H1 (cell line): ENCODE measurements at regions of chr22 and their contacts with region 1.

Region 1: DNA sequence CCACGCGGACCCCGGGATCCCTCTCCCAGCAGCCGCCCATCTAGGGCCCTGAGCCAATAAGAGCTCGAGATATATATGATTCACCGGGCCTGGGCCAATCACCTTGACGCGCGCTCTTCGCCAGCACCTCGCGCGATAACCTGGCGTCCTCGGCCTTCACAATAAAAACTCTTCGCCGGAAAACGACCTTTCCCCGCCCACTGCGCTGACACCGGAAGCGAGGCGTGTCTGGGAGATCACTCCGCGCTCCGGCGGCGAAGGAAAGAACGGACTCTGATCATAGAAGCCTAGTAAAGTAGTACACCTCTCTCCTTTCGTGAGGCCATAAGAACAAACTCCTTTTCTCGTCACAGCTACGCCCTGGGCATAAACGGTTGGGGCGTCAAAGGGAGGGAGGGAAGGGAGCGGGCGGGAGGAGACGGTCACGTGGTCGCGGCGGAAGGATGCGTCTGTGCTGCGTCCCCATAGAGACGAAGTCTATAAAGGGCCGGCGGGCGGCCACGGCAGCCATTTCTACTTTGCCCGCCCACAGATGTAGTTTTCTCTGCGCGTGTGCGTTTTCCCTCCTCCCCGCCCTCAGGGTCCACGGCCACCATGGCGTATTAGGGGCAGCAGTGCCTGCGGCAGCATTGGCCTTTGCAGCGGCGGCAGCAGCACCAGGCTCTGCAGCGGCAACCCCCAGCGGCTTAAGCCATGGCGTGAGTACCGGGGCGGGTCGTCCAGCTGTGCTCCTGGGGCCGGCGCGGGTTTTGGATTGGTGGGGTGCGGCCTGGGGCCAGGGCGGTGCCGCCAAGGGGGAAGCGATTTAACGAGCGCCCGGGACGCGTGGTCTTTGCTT is at the start of gene ATF4:
- DNase-seq: peak; percentile 93 to 96
- H3K4me3 ChIP-seq: peak within 1 kb of the TSS; percentile 93 to 99 (median 95)
- H3K27ac ChIP-seq: peak within 1 kb of the TSS; percentile 99
- H3K4me1 ChIP-seq: peaks cover 0 to 12% (median 5%) of the 10 kb centered on the region in 4 experiments; a peak in 4 of 7 replicates
- H3K27me3 ChIP-seq: peaks cover 0 to 6% (median 2%) of the 10 kb centered on the region in 4 experiments; a peak in 3 of 7 replicates
- CTCF ChIP-seq: no peak
- EP300 ChIP-seq: no peak; a peak in 1 of 3 replicates
- POLR2A ChIP-seq: peak; percentile 96 to 98
- RAD21 ChIP-seq: no peak
- total RNA-seq, gene ATF4: 543 and 553 TPM in 2 replicates

Region 2: DNA sequence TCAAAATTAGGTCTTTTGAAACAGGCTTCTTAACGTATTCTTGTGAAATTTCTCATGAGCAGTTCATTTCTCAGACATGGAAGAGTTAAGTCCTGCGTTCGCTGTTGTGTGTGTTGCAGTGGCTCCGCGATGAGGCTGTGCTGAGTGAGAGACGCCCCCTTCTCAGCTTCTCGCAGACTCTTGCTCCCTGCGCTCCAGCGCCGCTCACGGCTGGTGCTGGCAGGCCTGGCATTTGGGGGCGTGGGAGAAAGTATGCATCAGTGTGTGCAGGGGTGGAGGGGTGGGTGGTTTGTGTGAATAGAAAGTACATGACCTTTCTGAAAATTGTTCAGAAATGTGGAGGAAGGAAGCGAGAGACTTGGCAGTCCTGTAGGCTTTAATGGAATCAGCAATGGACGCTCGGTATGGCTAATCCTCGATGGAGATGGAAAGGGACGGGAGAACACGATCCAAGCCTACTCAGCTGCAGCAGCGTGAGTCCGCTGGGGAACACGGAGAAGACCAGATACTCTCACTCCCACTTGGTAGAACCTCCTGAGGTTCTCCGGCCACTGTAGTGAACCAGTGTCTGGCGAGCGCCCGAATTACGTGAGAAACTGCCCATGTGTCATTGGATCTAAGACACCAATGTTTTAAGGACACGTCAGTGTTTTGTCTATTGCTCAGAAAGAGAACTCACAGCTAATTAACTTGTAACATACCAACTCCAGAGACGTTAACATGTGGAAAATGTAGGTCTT is 114.8 kb before region 1 on chr22:
- CTCF ChIA-PET with region 1: interaction called, 4 read pairs
- POLR2A ChIA-PET with region 1: interaction called, 13 read pairs
- DNase-seq: no peak
- H3K4me3 ChIP-seq: no peak overlapping the region
- H3K27ac ChIP-seq: no peak overlapping the region
- H3K4me1 ChIP-seq: peaks cover 0 to under 1% (median under 1%) of the 10 kb centered on the region in 4 experiments; a peak in 2 of 7 replicates
- H3K27me3 ChIP-seq: no peaks in the 10 kb centered on the region
- CTCF ChIP-seq: no peak
- EP300 ChIP-seq: no peak
- POLR2A ChIP-seq: no peak
- RAD21 ChIP-seq: no peak

Region 3: DNA sequence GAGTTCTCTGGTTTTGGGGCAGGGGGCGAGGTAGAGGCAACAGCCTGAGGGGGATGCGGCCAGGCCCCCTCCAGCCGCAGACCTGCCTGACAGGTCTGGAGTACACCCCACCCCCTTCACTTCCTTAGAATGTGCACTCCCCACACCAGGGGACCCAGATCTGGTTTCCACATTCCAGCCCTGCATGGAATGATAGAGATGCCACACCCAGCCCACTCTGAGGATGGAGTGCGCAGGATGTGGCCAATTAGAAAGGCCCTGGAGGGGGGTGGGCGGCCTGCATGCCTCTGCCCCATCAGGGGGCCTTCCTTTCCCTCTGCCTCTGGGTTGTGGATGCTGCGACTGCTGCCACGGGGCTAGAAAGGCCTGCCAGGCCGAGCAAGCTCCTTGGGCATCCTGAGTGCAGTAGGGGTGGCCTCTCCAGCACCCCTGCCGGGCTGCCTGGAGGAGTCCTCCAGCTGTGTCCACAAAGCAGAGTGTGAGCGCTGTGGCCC is 91.6 kb before region 1 on chr22:
- CTCF ChIA-PET with region 1: interaction called, 4 read pairs
- POLR2A ChIA-PET with region 1: interaction called, 13 read pairs
- DNase-seq: peak; percentile 80 to 85
- H3K4me3 ChIP-seq: peak overlapping the region in 2 of 4 experiments; percentile 19 to 32; a peak in 2 of 8 replicates
- H3K27ac ChIP-seq: peak overlapping the region; percentile 46; the same call in 1 of the 2 replicates
- H3K4me1 ChIP-seq: peaks cover 8 to 23% (median 17%) of the 10 kb centered on the region in 4 experiments
- H3K27me3 ChIP-seq: no peaks in the 10 kb centered on the region
- CTCF ChIP-seq: peak in 2 of 3 experiments; percentile 43 to 52; a peak in 3 of 4 replicates
- EP300 ChIP-seq: peak; percentile 27 to 90; a peak in 2 of 3 replicates
- POLR2A ChIP-seq: peak in 1 of 2 experiments; percentile 50; a peak in 1 of 3 replicates
- RAD21 ChIP-seq: peak; percentile 38 to 43

Region 4: DNA sequence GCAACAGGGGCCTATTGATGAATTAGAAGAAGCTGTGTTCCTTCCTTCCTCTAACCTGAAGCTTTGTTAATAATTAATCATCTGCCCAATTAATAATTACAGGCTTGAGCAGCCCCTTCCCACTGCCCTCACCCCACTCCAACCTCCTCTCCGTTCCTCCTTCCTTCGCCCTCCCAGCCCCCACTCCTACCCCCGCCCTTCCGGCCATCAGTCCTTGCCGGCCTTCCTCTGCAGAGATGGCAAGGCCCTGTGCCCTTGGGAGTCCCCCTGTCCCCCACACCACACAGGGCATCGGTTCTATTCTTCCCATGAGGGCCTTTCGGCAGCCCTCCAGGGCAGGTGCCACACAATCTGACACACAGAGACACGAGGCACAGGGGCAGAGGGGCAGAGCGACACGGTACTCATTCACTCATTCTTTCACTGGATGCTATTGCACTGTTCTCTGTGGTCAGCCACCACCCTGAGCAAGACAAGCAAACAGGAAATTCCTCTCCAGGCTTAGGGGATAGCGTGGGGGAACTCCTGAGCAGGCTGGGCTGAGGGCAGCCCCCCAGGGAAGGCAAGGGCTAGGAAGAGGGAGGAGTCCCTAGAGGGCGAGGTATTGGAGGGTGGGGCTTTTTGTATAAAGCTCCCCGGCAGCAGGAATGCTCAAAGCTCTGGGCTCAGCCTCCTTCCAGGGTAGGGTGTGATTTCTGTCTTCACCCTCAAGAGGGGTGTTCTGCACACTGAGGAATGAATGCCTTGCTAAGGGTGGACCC is 48.7 kb before region 1 on chr22:
- CTCF ChIA-PET with region 1: no interaction called
- POLR2A ChIA-PET with region 1: interaction called, 11 read pairs
- DNase-seq: no peak
- H3K4me3 ChIP-seq: no peak overlapping the region; a peak in 1 of 8 replicates
- H3K27ac ChIP-seq: no peak overlapping the region
- H3K4me1 ChIP-seq: peaks cover 16 to 51% (median 39%) of the 10 kb centered on the region in 4 experiments
- H3K27me3 ChIP-seq: no peaks in the 10 kb centered on the region
- CTCF ChIP-seq: no peak
- EP300 ChIP-seq: no peak
- POLR2A ChIP-seq: no peak
- RAD21 ChIP-seq: no peak

Region 5: DNA sequence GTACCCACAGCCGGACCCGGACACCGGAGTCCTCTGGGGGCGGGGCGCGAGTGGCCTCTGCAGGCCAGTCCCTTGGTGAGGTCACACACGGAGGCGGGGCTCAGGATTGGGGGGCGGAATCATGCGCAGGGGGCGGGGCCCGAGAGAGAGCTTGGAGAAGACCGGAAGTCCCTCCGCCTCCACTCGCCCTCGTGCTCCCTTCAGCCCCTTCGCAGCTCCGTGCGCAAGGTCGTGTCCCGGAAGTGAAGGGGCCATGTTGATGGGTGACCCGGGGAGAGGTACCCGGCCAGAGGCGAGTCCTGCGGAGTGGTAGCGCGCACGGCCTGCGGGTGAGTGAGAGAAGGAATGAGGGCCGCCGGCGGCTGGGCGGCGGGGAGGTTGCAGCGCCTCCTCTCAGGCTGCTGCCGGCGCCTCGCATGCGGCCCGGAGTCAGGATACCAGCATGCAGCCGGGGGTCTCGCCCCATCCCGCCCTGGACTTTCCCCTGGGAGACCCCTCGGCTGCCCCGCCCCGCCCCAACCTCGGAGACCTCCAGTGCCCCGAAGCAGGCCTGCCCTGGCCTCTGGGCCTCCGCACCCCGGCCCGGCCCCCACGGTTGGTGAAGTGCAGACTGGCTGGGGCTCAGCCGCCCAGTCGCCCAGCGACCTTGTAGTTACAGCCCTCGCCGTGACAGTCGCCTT is 18.0 kb before region 1 on chr22 and contains the start of gene MIEF1:
- CTCF ChIA-PET with region 1: interaction called, 361 read pairs
- POLR2A ChIA-PET with region 1: interaction called, 42 read pairs
- DNase-seq: peak; percentile 88 to 99
- H3K4me3 ChIP-seq: peak within 1 kb of the TSS; percentile 68 to 88 (median 80)
- H3K27ac ChIP-seq: no peak within 1 kb of the TSS
- H3K4me1 ChIP-seq: peaks cover 3 to 9% (median 4%) of the 10 kb centered on the region in 4 experiments; a peak in 6 of 7 replicates
- H3K27me3 ChIP-seq: peaks cover 0 to 56% (median 36%) of the 10 kb centered on the region in 4 experiments; a peak in 6 of 7 replicates
- CTCF ChIP-seq: no peak
- EP300 ChIP-seq: no peak
- POLR2A ChIP-seq: peak in 1 of 2 experiments; percentile 78; a peak in 2 of 3 replicates
- RAD21 ChIP-seq: no peak
- total RNA-seq, gene MIEF1: 31.4 and 32.7 TPM in 2 replicates

Region 6: DNA sequence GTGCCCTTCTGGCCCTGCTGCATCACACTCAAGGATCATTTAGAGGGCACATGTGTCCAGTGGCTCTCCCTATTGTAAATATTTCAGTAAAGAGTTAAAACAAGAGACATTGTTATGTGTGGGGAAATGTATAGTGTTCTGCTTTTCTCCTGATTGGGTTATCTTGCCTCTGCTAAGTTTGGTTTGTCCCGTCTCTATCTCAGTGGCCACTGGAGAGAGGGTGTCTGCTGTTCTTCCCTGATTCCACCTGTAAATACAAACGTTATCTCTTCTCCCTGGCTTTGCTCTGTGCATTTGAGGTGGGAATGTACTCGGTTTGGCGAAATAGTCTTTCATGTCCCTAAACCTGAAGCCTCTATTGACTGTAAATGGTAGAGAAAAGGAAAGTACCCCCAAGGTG is 11.9 kb before region 1 on chr22:
- CTCF ChIA-PET with region 1: interaction called, 361 read pairs
- POLR2A ChIA-PET with region 1: interaction called, 72 read pairs
- DNase-seq: no peak
- H3K4me3 ChIP-seq: no peak overlapping the region
- H3K27ac ChIP-seq: no peak overlapping the region
- H3K4me1 ChIP-seq: peaks cover 0 to 3% (median 0%) of the 10 kb centered on the region in 4 experiments; a peak in 2 of 7 replicates
- H3K27me3 ChIP-seq: peaks cover 38 to 77% (median 75%) of the 10 kb centered on the region in 4 experiments
- CTCF ChIP-seq: no peak
- EP300 ChIP-seq: no peak
- POLR2A ChIP-seq: no peak
- RAD21 ChIP-seq: no peak